Right cardiac atrium (tissue), 5 donors: ENCODE measurements at regions of chr10 and their contacts with region 1.

Region 1: GRCh38 chr10:88227342-88228018 is 355.6 kb downstream of the RNLS start:
- DNase-seq: peak; percentile 44 to 65 (median 55)
- ATAC-seq: peak; percentile 76 to 81
- H3K4me3 ChIP-seq: no peak overlapping the region
- H3K27ac ChIP-seq: peak overlapping the region; percentile 73
- H3K4me1 ChIP-seq: peaks cover 11% of the 10 kb centered on the region
- H3K27me3 ChIP-seq: no peaks in the 10 kb centered on the region

Region 2: DNA sequence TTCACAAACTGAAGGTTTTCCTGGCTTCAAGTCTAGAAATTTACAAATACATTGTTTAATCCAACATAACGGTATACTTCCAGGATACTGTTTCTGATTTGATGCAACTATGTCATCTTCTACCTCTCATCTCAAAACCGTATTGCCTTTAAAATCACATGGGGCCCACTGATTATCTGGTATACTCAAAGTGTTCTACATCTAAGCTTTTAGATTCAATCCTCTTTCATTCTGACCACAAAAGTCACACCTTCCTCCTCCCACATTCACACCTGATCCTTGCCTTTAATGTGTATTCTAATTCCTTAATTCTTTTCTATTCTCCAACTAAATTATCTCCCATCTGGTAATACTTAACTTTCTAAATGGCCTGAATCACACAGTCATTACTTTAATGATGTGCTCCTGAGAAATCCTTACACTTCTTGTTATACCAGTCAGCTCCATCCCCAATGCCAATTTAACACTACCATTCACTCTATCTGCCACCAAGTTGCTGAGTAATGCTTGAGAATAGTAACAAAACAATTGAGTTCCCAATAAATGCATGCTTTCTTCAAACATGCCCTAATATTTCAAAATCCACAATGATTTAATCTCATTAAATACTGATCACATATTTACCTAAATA is 422.4 kb before region 1 on chr10:
- intact Hi-C with region 1: loop called in 1 of 4 experiments (anchors 5 kb)
- DNase-seq: no peak
- ATAC-seq: no peak
- H3K4me3 ChIP-seq: no peak overlapping the region
- H3K27ac ChIP-seq: no peak overlapping the region
- H3K4me1 ChIP-seq: no peaks in the 10 kb centered on the region
- H3K27me3 ChIP-seq: no peaks in the 10 kb centered on the region

Region 3: GRCh38 chr10:88640186-88640585 is 412.7 kb after region 1 on chr10:
- intact Hi-C with region 1: no loop called
- DNase-seq: no peak
- ATAC-seq: no peak
- H3K4me3 ChIP-seq: no peak overlapping the region
- H3K27ac ChIP-seq: no peak overlapping the region
- H3K4me1 ChIP-seq: no peaks in the 10 kb centered on the region
- H3K27me3 ChIP-seq: no peaks in the 10 kb centered on the region